ENCODE measurements at regions of chr5 and their contacts with region 1.

Region 1: DNA sequence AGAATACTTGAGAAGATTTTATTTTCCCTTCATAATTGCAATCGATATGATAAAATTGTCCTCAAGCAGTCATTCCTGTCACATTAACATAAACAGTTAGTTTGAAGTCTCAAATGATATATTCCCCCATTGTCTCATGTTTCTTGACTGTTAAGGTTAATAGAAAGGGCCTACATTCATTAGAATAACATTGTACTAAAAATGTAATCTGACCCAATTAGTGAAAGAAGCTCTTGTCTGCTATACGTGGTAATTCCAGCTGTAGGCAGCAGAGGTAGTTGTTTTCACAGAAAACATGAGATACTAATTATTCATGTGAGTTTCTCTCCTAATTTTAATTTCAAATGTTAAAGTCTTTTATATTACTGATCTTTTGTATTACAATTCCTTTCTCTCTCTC is 25.9 kb upstream of the AP3B1 start:
- DNase-seq: peak in 2 of 35 experiments; percentile 4 to 41
- ATAC-seq: no peak
- H3K4me3 ChIP-seq: no peak overlapping the region
- H3K4me3 Mint-ChIP-seq: no peak overlapping the region
- H3K27ac ChIP-seq: no peak overlapping the region
- H3K27ac Mint-ChIP-seq: no peak overlapping the region
- H3K4me1 ChIP-seq: no peaks in the 10 kb centered on the region
- H3K4me1 Mint-ChIP-seq: no peaks in the 10 kb centered on the region
- H3K27me3 ChIP-seq: peaks cover 0 to 6% of the 10 kb centered on the region in 2 experiments
- H3K27me3 Mint-ChIP-seq: peaks cover 7 to 11% of the 10 kb centered on the region in 2 donors

Region 2: DNA sequence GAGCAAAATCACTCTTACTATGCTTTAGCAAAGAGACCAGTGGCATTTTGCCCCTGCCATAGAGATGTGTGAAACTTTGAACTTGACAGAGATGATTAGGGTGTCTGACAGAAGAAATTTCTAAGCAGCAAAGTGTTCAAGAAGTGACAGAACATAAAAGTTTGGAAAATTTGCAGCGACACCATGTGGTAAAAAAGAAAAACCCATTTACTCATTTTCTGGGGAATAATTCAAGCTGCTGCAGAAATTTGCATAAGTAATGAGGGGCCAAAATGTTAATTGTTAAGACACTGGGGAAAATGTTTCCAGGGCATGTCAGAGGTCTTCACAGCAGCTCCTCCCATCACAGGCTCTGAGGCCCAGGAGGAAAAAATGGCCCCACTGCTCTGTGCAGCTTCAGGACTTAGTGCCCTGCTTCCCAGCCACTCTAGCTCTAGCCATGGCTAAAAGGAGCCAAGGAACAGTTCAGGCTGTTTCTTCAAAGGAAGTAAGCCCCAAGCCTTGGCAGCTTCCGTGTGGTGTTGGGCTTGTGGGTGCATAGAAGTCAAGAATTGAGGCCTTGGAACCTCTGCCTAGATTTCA is 19.8 kb before region 1 on chr5:
- CTCF ChIA-PET with region 1: interaction called in 1 of 2 experiments, 4 read pairs
- POLR2A ChIA-PET with region 1: interaction called in 1 of 2 experiments, 10 read pairs
- DNase-seq: peak in 1 of 35 experiments; percentile 51
- ATAC-seq: no peak
- H3K4me3 ChIP-seq: no peak overlapping the region
- H3K4me3 Mint-ChIP-seq: no peak overlapping the region
- H3K27ac ChIP-seq: no peak overlapping the region
- H3K27ac Mint-ChIP-seq: no peak overlapping the region
- H3K4me1 ChIP-seq: peaks cover 0 to 4% of the 10 kb centered on the region in 2 experiments
- H3K4me1 Mint-ChIP-seq: peaks cover 3 to 5% (median 4%) of the 10 kb centered on the region in 3 donors
- H3K27me3 ChIP-seq: peaks cover 0 to 12% of the 10 kb centered on the region in 2 experiments
- H3K27me3 Mint-ChIP-seq: peaks cover 10 to 12% of the 10 kb centered on the region in 2 donors

Measured in T-cell (primary cell).